ENCODE measurements at regions of chr14 and their contacts with region 1.

Region 1: GRCh38 chr14:75654127-75654732 is 6.4 kb downstream of the ERG28 start:
- DNase-seq: peak; percentile 73 to 89 (median 85)
- ATAC-seq: peak; percentile 81 to 86
- H3K4me3 ChIP-seq: no peak overlapping the region
- H3K27ac ChIP-seq: no peak overlapping the region
- H3K4me1 ChIP-seq: no peaks in the 10 kb centered on the region
- H3K27me3 ChIP-seq: no peaks in the 10 kb centered on the region

Region 2: DNA sequence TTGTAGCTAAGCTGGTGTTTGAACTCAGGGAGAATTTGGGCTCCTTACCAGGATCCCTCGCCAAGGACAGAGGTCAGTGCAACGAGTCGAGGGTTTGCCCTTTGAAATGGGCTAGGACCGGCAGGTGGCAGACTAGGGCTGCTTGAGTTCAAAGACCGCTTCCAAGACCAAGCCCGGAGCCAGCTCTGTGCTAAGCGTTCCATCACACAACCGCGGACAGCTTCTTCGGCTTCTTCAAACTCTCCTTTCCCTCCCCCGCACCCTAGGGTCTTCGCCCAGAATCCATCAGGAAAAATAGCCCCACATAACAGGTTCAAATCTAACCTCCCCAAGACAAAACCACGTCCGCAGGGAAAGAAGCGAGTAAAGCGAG is 76.5 kb before region 1 on chr14:
- intact Hi-C with region 1: loop called (anchors 2 kb)
- DNase-seq: peak; percentile 90 to 96 (median 91)
- ATAC-seq: peak; percentile 89 to 90
- H3K4me3 ChIP-seq: peak overlapping the region; percentile 53
- H3K27ac ChIP-seq: peak overlapping the region; percentile 82
- H3K4me1 ChIP-seq: peaks cover 5% of the 10 kb centered on the region
- H3K27me3 ChIP-seq: no peaks in the 10 kb centered on the region

Region 3: GRCh38 chr14:75821831-75822521 is 167.7 kb after region 1 on chr14:
- intact Hi-C with region 1: no loop called
- DNase-seq: no peak
- ATAC-seq: no peak
- H3K4me3 ChIP-seq: no peak overlapping the region
- H3K27ac ChIP-seq: no peak overlapping the region
- H3K4me1 ChIP-seq: peaks cover 4% of the 10 kb centered on the region
- H3K27me3 ChIP-seq: no peaks in the 10 kb centered on the region